ENCODE measurements at regions of chr2 and their contacts with region 1.

Region 1: GRCh38 chr2:197031803-197032202 is 105.3 kb upstream of the PGAP1 start:
- DNase-seq: peak in 2 of 9 donors; percentile 19 to 22
- ATAC-seq: no peak
- H3K4me3 ChIP-seq: no peak overlapping the region
- H3K4me3 Mint-ChIP-seq: peak overlapping the region in 7 of 10 donors; percentile 6 to 58 (median 43)
- H3K27ac ChIP-seq: no peak overlapping the region
- H3K27ac Mint-ChIP-seq: peak overlapping the region; percentile 31 to 93 (median 75)
- H3K4me1 ChIP-seq: peaks cover 5 to 16% of the 10 kb centered on the region in 2 donors
- H3K4me1 Mint-ChIP-seq: peaks cover 29 to 69% (median 54%) of the 10 kb centered on the region in 7 donors
- H3K27me3 ChIP-seq: no peaks in the 10 kb centered on the region
- H3K27me3 Mint-ChIP-seq: no peaks in the 10 kb centered on the region

Region 2: DNA sequence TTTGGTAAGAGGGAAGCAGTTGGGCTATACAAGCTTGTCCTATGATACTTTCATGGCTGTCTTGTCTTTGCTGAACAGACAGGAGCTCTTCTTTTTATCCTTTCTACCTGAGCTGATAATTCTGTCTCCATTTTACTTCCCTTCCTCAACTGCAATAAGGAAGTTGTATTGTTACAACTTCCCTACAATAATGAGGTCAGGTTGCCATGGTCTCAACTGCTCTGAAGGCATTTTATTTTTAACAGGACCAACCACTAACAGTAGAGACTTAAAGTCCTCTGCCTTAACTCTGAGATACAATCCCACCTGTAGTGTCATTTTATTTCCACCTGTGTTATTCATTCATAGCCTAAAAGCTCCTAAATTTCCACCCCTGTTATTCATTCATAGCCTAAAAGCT is 13.3 kb after region 1 on chr2:
- CTCF ChIA-PET with region 1: interaction called, 4 read pairs
- POLR2A ChIA-PET with region 1: interaction called, 3 read pairs
- intact Hi-C with region 1: loop called in 1 of 2 experiments (anchors 2 kb)
- DNase-seq: no peak
- ATAC-seq: no peak
- H3K4me3 ChIP-seq: no peak overlapping the region
- H3K4me3 Mint-ChIP-seq: no peak overlapping the region
- H3K27ac ChIP-seq: no peak overlapping the region
- H3K27ac Mint-ChIP-seq: peak overlapping the region in 8 of 9 donors; percentile 2 to 71 (median 52)
- H3K4me1 ChIP-seq: peaks cover 0 to 3% of the 10 kb centered on the region in 2 donors
- H3K4me1 Mint-ChIP-seq: peaks cover 6 to 32% (median 19%) of the 10 kb centered on the region in 7 donors
- H3K27me3 ChIP-seq: no peaks in the 10 kb centered on the region
- H3K27me3 Mint-ChIP-seq: no peaks in the 10 kb centered on the region